Thyroid gland (tissue), 4 donors: ENCODE measurements at regions of chr10 and their contacts with region 1.

Region 1: GRCh38 chr10:21285742-21286331 is 239.6 kb downstream of the SKIDA1 start:
- DNase-seq: no peak
- H3K4me3 ChIP-seq: no peak overlapping the region
- H3K27ac ChIP-seq: no peak overlapping the region
- H3K4me1 ChIP-seq: peaks cover 7 to 14% of the 10 kb centered on the region in 2 donors
- H3K27me3 ChIP-seq: no peaks in the 10 kb centered on the region
- CTCF ChIP-seq: no peak
- POLR2A ChIP-seq: no peak

Region 2: GRCh38 chr10:21355561-21356011 is 69.7 kb after region 1 on chr10:
- intact Hi-C with region 1: loop called (anchors 10 kb)
- DNase-seq: no peak
- H3K4me3 ChIP-seq: no peak overlapping the region
- H3K27ac ChIP-seq: no peak overlapping the region
- H3K4me1 ChIP-seq: peaks cover 0 to 11% of the 10 kb centered on the region in 2 donors
- H3K27me3 ChIP-seq: no peaks in the 10 kb centered on the region
- CTCF ChIP-seq: no peak
- POLR2A ChIP-seq: no peak

Region 3: GRCh38 chr10:21372651-21373410 is 87.0 kb after region 1 on chr10:
- intact Hi-C with region 1: no loop called
- DNase-seq: peak; percentile 6 to 8
- H3K4me3 ChIP-seq: no peak overlapping the region
- H3K27ac ChIP-seq: no peak overlapping the region
- H3K4me1 ChIP-seq: peaks cover 0 to 6% of the 10 kb centered on the region in 2 donors
- H3K27me3 ChIP-seq: no peaks in the 10 kb centered on the region
- CTCF ChIP-seq: no peak
- POLR2A ChIP-seq: no peak

Region 4: DNA sequence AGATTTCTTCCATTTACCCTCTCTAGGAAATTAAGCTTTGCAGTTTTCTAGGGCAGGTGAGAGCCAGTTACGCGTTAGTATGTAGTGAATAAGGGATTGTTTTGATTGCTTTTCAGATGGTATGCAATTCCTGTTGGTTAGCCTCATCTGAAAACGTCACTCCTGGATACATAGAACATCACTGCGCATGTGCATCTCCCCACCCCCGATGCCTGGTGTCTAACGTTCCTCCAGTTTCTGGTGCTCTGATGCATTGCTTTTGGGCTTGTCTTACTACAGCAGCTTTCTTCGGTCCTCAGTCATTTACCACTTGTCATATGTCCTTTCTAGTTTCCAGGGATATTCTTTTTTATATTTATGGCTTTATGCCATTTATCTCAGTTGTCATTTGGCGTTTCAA is 270.7 kb after region 1 on chr10:
- intact Hi-C with region 1: no loop called
- DNase-seq: no peak
- H3K4me3 ChIP-seq: no peak overlapping the region
- H3K27ac ChIP-seq: no peak overlapping the region
- H3K4me1 ChIP-seq: no peaks in the 10 kb centered on the region
- H3K27me3 ChIP-seq: no peaks in the 10 kb centered on the region
- CTCF ChIP-seq: no peak
- POLR2A ChIP-seq: no peak